B cell (primary cell): ENCODE measurements at regions of chr5 and their contacts with region 1.

Region 1: GRCh38 chr5:81971712-81972495 is at the start of gene ATG10:
- DNase-seq: peak; percentile 94
- ATAC-seq: peak; percentile 91
- H3K4me3 ChIP-seq: peak within 1 kb of the TSS; percentile 70 to 99 (median 80)
- H3K4me3 Mint-ChIP-seq: peak within 1 kb of the TSS; percentile 90
- H3K27ac ChIP-seq: peak within 1 kb of the TSS; percentile 94 to 95
- H3K27ac Mint-ChIP-seq: peak within 1 kb of the TSS; percentile 92
- H3K4me1 ChIP-seq: peaks cover 4 to 7% of the 10 kb centered on the region in 2 donors
- H3K4me1 Mint-ChIP-seq: peaks cover 12% of the 10 kb centered on the region
- H3K27me3 ChIP-seq: no peaks in the 10 kb centered on the region
- H3K27me3 Mint-ChIP-seq: no peaks in the 10 kb centered on the region
- CTCF ChIP-seq: no peak
- total RNA-seq, gene ATG10: 9.8 and 11.6 TPM in 2 replicates

Region 2: GRCh38 chr5:81202655-81203054 is 769.2 kb before region 1 on chr5:
- CTCF ChIA-PET with region 1: no interaction called
- POLR2A ChIA-PET with region 1: no interaction called
- intact Hi-C with region 1: no loop called
- DNase-seq: no peak
- ATAC-seq: no peak
- H3K4me3 ChIP-seq: no peak overlapping the region
- H3K4me3 Mint-ChIP-seq: no peak overlapping the region
- H3K27ac ChIP-seq: no peak overlapping the region
- H3K27ac Mint-ChIP-seq: no peak overlapping the region
- H3K4me1 ChIP-seq: no peaks in the 10 kb centered on the region
- H3K4me1 Mint-ChIP-seq: no peaks in the 10 kb centered on the region
- H3K27me3 ChIP-seq: no peaks in the 10 kb centered on the region
- H3K27me3 Mint-ChIP-seq: peaks cover 9% of the 10 kb centered on the region
- CTCF ChIP-seq: no peak

Region 3: DNA sequence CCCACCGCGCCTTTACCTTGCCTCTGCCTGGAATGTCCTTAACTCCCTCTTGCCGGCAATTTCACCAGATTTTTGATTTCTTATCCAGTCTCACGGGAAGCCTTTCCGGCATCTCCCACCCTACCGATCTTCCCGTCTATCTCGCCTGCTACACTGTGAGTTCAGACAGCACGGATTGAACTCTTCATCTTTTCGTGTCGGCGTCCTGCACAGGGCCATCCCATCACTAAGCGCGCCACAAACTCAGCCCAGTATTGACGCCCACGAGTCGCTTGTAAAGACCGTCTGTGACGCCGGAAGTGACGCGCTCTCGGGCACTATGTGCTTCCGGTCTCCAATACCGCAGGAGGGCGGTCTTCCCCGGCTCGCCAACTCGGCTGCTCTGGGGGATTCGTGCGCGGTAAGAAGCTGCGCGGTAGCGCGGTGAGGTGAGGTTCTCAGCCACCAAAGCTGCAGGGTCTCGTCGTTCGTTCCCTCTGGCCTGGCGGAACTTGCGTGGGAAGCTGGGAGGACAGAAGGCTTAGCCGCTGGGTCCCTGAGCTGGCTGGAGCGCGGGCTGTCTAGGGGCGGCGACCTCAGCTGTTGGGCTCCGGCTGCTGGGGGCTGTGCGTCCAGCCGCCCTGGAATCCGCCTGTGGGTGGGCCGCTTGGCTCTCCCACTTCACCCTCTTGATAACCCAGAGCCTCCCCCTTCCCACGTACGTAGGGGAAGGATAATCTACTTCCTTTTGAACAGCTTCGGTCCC is 670.5 kb before region 1 on chr5 and contains the start of gene ZCCHC9:
- CTCF ChIA-PET with region 1: no interaction called
- POLR2A ChIA-PET with region 1: no interaction called
- intact Hi-C with region 1: loop called (anchors 2 kb)
- DNase-seq: peak; percentile 95
- ATAC-seq: peak; percentile 92
- H3K4me3 ChIP-seq: peak within 1 kb of the TSS; percentile 77 to 98 (median 91)
- H3K4me3 Mint-ChIP-seq: peak within 1 kb of the TSS; percentile 91
- H3K27ac ChIP-seq: peak within 1 kb of the TSS; percentile 63 to 89
- H3K27ac Mint-ChIP-seq: peak within 1 kb of the TSS; percentile 93
- H3K4me1 ChIP-seq: peaks cover 23 to 26% of the 10 kb centered on the region in 2 donors
- H3K4me1 Mint-ChIP-seq: peaks cover 33% of the 10 kb centered on the region
- H3K27me3 ChIP-seq: no peaks in the 10 kb centered on the region
- H3K27me3 Mint-ChIP-seq: no peaks in the 10 kb centered on the region
- CTCF ChIP-seq: peak; percentile 29
- total RNA-seq, gene ZCCHC9: 23.0 and 23.7 TPM in 2 replicates

Region 4: GRCh38 chr5:81425569-81425968 is 546.3 kb before region 1 on chr5:
- CTCF ChIA-PET with region 1: no interaction called
- POLR2A ChIA-PET with region 1: no interaction called
- intact Hi-C with region 1: loop called (anchors 10 kb)
- DNase-seq: peak; percentile 54
- ATAC-seq: no peak
- H3K4me3 ChIP-seq: no peak overlapping the region
- H3K4me3 Mint-ChIP-seq: no peak overlapping the region
- H3K27ac ChIP-seq: no peak overlapping the region
- H3K27ac Mint-ChIP-seq: peak overlapping the region; percentile 70
- H3K4me1 ChIP-seq: no peaks in the 10 kb centered on the region
- H3K4me1 Mint-ChIP-seq: peaks cover 4% of the 10 kb centered on the region
- H3K27me3 ChIP-seq: no peaks in the 10 kb centered on the region
- H3K27me3 Mint-ChIP-seq: no peaks in the 10 kb centered on the region
- CTCF ChIP-seq: peak; percentile 85

Region 5: DNA sequence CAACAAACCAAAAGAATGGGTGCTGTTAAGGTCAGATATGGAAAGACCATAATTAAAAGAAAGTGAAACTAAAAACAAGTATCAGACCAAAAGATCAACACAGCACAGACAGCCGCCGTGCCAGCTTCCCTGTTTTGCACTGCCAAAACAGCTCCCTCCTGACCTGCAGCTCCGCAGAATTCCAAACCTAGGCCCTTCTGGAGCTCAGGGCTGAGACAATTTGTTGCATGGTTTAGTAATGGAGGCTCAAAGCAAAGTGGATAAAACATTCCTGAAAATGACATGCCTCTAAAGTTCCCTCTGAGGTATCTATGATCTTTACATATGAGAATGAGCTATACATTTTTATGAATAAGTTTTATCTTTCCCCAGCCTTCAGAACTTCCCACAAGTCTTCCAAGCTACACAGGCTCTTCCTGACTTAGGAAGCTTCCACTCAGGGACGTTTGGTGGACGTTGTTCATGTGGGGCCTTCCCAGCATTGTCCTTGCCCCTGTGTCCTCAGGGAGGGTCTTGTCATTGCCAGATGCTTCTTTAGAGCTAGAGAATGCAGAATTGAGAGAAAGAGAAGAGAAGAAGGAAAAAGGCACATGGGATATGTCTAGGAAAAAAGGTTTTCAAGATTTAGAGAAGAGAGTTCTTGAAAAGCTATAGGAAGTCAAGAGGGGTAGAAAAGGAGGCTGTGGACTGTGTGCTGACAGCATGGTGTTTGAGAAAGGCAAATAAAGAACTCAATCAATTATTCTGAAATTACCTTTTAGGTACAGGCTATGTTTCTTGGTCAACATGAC is 192.6 kb before region 1 on chr5:
- CTCF ChIA-PET with region 1: no interaction called
- POLR2A ChIA-PET with region 1: no interaction called
- intact Hi-C with region 1: loop called (anchors 2 kb)
- DNase-seq: peak; percentile 71
- ATAC-seq: peak; percentile 93
- H3K4me3 ChIP-seq: peak overlapping the region; percentile 24 to 75 (median 50)
- H3K4me3 Mint-ChIP-seq: peak overlapping the region; percentile 86
- H3K27ac ChIP-seq: peak overlapping the region; percentile 71 to 86
- H3K27ac Mint-ChIP-seq: peak overlapping the region; percentile 94
- H3K4me1 ChIP-seq: peaks cover 13 to 17% of the 10 kb centered on the region in 2 donors
- H3K4me1 Mint-ChIP-seq: peaks cover 21% of the 10 kb centered on the region
- H3K27me3 ChIP-seq: no peaks in the 10 kb centered on the region
- H3K27me3 Mint-ChIP-seq: no peaks in the 10 kb centered on the region
- CTCF ChIP-seq: no peak

Region 6: GRCh38 chr5:82018462-82018861 is 46.6 kb after region 1 on chr5:
- CTCF ChIA-PET with region 1: no interaction called
- POLR2A ChIA-PET with region 1: no interaction called
- intact Hi-C with region 1: no loop called
- DNase-seq: no peak
- ATAC-seq: no peak
- H3K4me3 ChIP-seq: no peak overlapping the region
- H3K4me3 Mint-ChIP-seq: no peak overlapping the region
- H3K27ac ChIP-seq: no peak overlapping the region
- H3K27ac Mint-ChIP-seq: no peak overlapping the region
- H3K4me1 ChIP-seq: no peaks in the 10 kb centered on the region
- H3K4me1 Mint-ChIP-seq: no peaks in the 10 kb centered on the region
- H3K27me3 ChIP-seq: no peaks in the 10 kb centered on the region
- H3K27me3 Mint-ChIP-seq: no peaks in the 10 kb centered on the region
- CTCF ChIP-seq: no peak

Region 7: GRCh38 chr5:82174128-82174918 is 202.4 kb after region 1 on chr5:
- CTCF ChIA-PET with region 1: no interaction called
- POLR2A ChIA-PET with region 1: no interaction called
- intact Hi-C with region 1: loop called (anchors 5 kb)
- DNase-seq: peak; percentile 74
- ATAC-seq: peak; percentile 88
- H3K4me3 ChIP-seq: no peak overlapping the region
- H3K4me3 Mint-ChIP-seq: peak overlapping the region; percentile 31
- H3K27ac ChIP-seq: peak overlapping the region in 1 of 2 donors; percentile 32
- H3K27ac Mint-ChIP-seq: peak overlapping the region; percentile 60
- H3K4me1 ChIP-seq: peaks cover 9% of the 10 kb centered on the region in 2 donors
- H3K4me1 Mint-ChIP-seq: peaks cover 18% of the 10 kb centered on the region
- H3K27me3 ChIP-seq: no peaks in the 10 kb centered on the region
- H3K27me3 Mint-ChIP-seq: no peaks in the 10 kb centered on the region
- CTCF ChIP-seq: peak; percentile 71

Region 8: GRCh38 chr5:82278095-82278918 is 306.4 kb after region 1 on chr5 and contains the start of gene RPS23:
- CTCF ChIA-PET with region 1: no interaction called
- POLR2A ChIA-PET with region 1: no interaction called
- intact Hi-C with region 1: loop called (anchors 1 kb)
- DNase-seq: peak; percentile 93
- ATAC-seq: peak; percentile 95
- H3K4me3 ChIP-seq: peak within 1 kb of the TSS; percentile 80 to 98 (median 90)
- H3K4me3 Mint-ChIP-seq: peak within 1 kb of the TSS; percentile 91
- H3K27ac ChIP-seq: peak within 1 kb of the TSS; percentile 82 to 89
- H3K27ac Mint-ChIP-seq: peak within 1 kb of the TSS; percentile 94
- H3K4me1 ChIP-seq: peaks cover 26 to 27% of the 10 kb centered on the region in 2 donors
- H3K4me1 Mint-ChIP-seq: peaks cover 37% of the 10 kb centered on the region
- H3K27me3 ChIP-seq: no peaks in the 10 kb centered on the region
- H3K27me3 Mint-ChIP-seq: no peaks in the 10 kb centered on the region
- CTCF ChIP-seq: no peak
- total RNA-seq, gene RPS23: 3,327 and 3,420 TPM in 2 replicates